WTC11 (cell line): ENCODE measurements at regions of chr19 and their contacts with region 1.

Region 1: DNA sequence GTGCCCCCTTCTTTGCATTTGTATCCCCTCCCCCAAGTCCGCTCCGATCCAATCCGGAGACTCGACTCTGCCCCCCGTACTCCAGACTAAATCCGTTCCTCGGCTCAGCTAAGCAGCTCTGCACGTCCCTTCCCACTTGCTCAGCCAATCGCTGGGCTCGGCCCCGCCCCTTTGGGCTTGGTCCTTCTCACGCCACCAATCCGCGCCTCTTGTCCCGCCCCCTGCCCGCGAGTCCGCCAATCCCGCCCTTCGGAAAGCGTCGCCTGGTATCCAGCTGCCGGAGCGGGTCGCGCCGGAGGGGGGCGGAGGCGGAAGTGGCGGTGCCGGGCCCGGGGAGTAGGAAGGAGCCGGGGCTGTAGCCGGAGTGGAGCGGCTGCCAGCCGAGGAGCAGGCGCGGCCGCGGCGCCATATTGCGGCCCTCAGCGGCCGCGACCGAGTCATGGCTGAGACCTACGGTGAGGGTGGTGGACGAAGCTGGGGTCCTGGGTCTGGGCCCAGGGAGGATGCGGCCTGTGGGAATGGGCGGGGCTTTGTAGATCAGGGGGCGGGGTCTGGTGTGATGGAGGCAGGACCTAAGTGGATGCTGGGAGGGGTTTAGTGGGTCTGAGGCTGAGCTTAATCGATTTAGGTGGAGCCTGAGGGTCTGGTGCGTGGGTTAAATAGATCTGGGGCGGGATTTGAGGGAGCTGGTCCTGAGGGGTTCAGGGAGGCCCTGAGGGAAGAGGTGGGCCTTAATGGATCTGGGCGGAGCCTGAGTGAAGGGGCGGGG is at the start of gene RAB4B:
- DNase-seq: peak; percentile 100
- ATAC-seq: peak; percentile 79
- H3K4me3 Mint-ChIP-seq: peak within 1 kb of the TSS; percentile 76
- H3K27ac Mint-ChIP-seq: peak within 1 kb of the TSS; percentile 97
- H3K4me1 Mint-ChIP-seq: peaks cover 27% of the 10 kb centered on the region
- H3K27me3 Mint-ChIP-seq: no peaks in the 10 kb centered on the region
- CTCF ChIP-seq: no peak
- total RNA-seq, gene RAB4B: 29.7 to 34.1 TPM (median 30.5 TPM) in 3 replicates

Region 2: GRCh38 chr19:40690693-40691420 is 87.3 kb before region 1 on chr19:
- CTCF ChIA-PET with region 1: interaction called, 3 read pairs
- POLR2A ChIA-PET with region 1: interaction called, 10 read pairs
- DNase-seq: peak; percentile 91
- ATAC-seq: peak; percentile 83
- H3K4me3 Mint-ChIP-seq: peak overlapping the region; percentile 86
- H3K27ac Mint-ChIP-seq: peak overlapping the region; percentile 95
- H3K4me1 Mint-ChIP-seq: peaks cover 6% of the 10 kb centered on the region
- H3K27me3 Mint-ChIP-seq: no peaks in the 10 kb centered on the region
- CTCF ChIP-seq: no peak

Region 3: DNA sequence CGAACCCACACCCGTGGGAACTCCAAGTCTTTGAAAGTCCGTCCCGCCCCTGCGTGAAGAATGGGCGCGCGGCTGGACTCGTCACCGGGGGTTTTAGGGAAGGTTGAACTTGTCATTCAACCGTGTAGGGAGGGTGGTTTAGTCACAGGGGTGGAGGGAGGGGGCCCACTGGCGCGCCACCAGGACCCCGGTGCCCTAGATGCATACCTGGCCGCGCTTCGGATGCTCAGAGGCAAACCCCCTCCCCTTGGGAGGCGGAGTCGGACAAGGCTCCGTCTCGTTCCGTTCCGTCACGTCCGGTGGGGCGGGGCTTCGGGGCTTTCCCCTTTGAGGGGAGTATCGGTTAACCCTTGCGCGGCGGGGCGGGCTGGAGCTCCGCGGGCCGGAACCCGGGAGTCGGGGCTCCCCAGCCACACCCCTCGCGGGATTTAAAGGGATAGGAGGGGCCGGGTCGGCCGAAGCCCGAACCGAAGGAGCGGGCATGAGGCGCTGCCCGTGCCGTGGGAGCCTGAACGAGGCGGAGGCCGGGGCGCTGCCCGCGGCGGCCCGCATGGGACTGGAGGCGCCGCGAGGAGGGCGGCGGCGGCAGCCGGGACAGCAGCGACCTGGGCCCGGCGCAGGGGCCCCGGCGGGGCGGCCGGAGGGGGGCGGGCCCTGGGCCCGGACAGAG is 61.3 kb before region 1 on chr19 and contains the starts of genes COQ8B and ITPKC:
- CTCF ChIA-PET with region 1: interaction called, 14 read pairs
- POLR2A ChIA-PET with region 1: interaction called, 18 read pairs
- DNase-seq: peak; percentile 100
- ATAC-seq: peak; percentile 55
- H3K4me3 Mint-ChIP-seq: peak within 1 kb of the TSS; percentile 98
- H3K27ac Mint-ChIP-seq: peak within 1 kb of the TSS; percentile 99
- H3K4me1 Mint-ChIP-seq: peaks cover 33% of the 10 kb centered on the region
- H3K27me3 Mint-ChIP-seq: no peaks in the 10 kb centered on the region
- CTCF ChIP-seq: no peak
- total RNA-seq, gene COQ8B: 55.6 to 62.9 TPM (median 59.9 TPM) in 3 replicates
- total RNA-seq, gene ITPKC: 10.4 to 13.8 TPM (median 10.6 TPM) in 3 replicates

Region 4: GRCh38 chr19:40750059-40750873 is 27.9 kb before region 1 on chr19 and contains the start of gene ACTMAP:
- CTCF ChIA-PET with region 1: interaction called, 22 read pairs
- POLR2A ChIA-PET with region 1: interaction called, 34 read pairs
- DNase-seq: peak; percentile 99
- ATAC-seq: peak; percentile 93
- H3K4me3 Mint-ChIP-seq: peak within 1 kb of the TSS; percentile 99
- H3K27ac Mint-ChIP-seq: peak within 1 kb of the TSS; percentile 100
- H3K4me1 Mint-ChIP-seq: peaks cover 38% of the 10 kb centered on the region
- H3K27me3 Mint-ChIP-seq: no peaks in the 10 kb centered on the region
- CTCF ChIP-seq: no peak
- total RNA-seq, gene ACTMAP: 29.6 to 42.4 TPM (median 40.2 TPM) in 3 replicates

Region 5: GRCh38 chr19:40798223-40798996 is 20.3 kb after region 1 on chr19:
- CTCF ChIA-PET with region 1: interaction called, 76 read pairs
- POLR2A ChIA-PET with region 1: interaction called, 48 read pairs
- DNase-seq: peak; percentile 100
- ATAC-seq: peak; percentile 80
- H3K4me3 Mint-ChIP-seq: peak overlapping the region; percentile 86
- H3K27ac Mint-ChIP-seq: peak overlapping the region; percentile 98
- H3K4me1 Mint-ChIP-seq: peaks cover 35% of the 10 kb centered on the region
- H3K27me3 Mint-ChIP-seq: no peaks in the 10 kb centered on the region
- CTCF ChIP-seq: no peak